IMR-90 (cell line): ENCODE measurements at regions of chr6 and their contacts with region 1.

Region 1: GRCh38 chr6:135423649-135424128 is 73.9 kb downstream of the AHI1 start:
- DNase-seq: peak; percentile 59
- ATAC-seq: peak; percentile 89
- H3K4me3 ChIP-seq: no peak overlapping the region
- H3K27ac ChIP-seq: no peak overlapping the region
- H3K4me1 ChIP-seq: 0 out of 2 replicates have a peak, but pooled peaks cover 2% of the 10 kb centered on the region
- H3K27me3 ChIP-seq: no peaks in the 10 kb centered on the region
- CTCF ChIP-seq: peak; percentile 78
- POLR2A ChIP-seq: no peak
- RAD21 ChIP-seq: peak; percentile 80

Region 2: DNA sequence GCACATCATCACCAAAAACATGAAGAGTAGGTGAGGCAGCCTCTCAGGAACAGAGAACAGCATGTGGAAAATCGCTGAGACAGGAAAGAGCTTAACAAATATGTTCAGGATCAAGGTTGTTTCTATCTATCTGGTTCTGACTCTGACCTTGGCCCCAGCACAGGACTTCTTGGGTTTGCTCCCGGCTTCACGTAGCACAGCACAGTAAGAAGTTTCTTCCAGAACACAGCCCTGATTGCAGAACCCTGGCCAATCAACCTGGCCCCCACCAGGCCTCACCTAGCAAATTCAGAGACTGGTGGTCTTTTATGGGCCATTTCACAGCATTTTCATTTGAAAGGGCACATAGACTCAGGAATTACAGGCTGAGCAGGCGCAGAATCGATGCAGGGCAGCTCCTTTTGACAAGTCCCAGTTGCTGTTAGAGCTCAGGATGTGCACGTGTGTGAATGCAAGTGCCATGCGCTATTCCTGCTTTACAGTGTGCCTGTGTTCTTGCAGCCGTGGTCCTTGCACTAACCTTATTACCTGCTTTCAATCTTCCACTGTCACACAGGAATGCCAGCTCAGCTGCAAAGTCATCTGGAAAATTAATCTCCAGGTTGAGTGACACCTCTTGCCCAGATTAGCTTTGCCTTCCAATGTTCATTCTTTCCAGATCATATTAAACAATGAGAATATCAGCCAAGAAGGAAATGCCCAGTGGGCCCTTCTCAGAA is 1270.8 kb before region 1 on chr6:
- CTCF ChIA-PET with region 1: no interaction called
- POLR2A ChIA-PET with region 1: no interaction called
- dilution Hi-C with region 1: no loop called
- in situ Hi-C with region 1: loop called (anchors 25 kb)
- intact Hi-C with region 1: loop called (anchors 10 kb)
- DNase-seq: no peak
- ATAC-seq: no peak
- H3K4me3 ChIP-seq: no peak overlapping the region
- H3K27ac ChIP-seq: no peak overlapping the region
- H3K4me1 ChIP-seq: no peaks in the 10 kb centered on the region
- H3K27me3 ChIP-seq: no peaks in the 10 kb centered on the region
- CTCF ChIP-seq: no peak
- POLR2A ChIP-seq: no peak
- RAD21 ChIP-seq: no peak

Region 3: DNA sequence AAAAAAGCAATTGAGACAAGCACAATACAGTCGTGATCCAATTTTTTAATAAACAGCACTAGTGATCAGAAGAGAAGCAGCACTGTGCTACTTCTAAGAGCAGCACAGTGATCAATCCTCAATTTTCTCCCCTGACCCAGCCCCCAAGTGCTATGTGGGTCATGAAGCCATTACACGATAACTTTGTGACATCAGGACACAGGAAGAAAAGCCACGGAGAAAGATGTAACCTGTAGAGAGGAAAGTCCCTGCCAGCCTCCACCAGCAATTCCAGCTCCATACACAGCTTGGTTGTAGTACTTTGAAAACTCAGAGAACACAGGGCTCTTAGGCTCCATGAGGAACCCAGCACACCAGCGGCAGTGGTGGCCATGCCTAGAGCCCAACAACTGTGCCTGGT is 287.9 kb before region 1 on chr6:
- CTCF ChIA-PET with region 1: no interaction called
- POLR2A ChIA-PET with region 1: no interaction called
- dilution Hi-C with region 1: no loop called
- in situ Hi-C with region 1: loop called (anchors 10 kb)
- intact Hi-C with region 1: no loop called
- DNase-seq: no peak
- ATAC-seq: no peak
- H3K4me3 ChIP-seq: no peak overlapping the region
- H3K27ac ChIP-seq: no peak overlapping the region
- H3K4me1 ChIP-seq: no peaks in the 10 kb centered on the region
- H3K27me3 ChIP-seq: peaks cover 27% of the 10 kb centered on the region
- CTCF ChIP-seq: no peak
- POLR2A ChIP-seq: no peak
- RAD21 ChIP-seq: no peak

Region 4: GRCh38 chr6:135145063-135145800 is 278.5 kb before region 1 on chr6:
- CTCF ChIA-PET with region 1: interaction called, 4 read pairs
- POLR2A ChIA-PET with region 1: no interaction called
- dilution Hi-C with region 1: no loop called
- in situ Hi-C with region 1: no loop called
- intact Hi-C with region 1: loop called (anchors 1 kb)
- DNase-seq: peak; percentile 43
- ATAC-seq: peak; percentile 54; the same call in 1 of the 2 replicates
- H3K4me3 ChIP-seq: no peak overlapping the region
- H3K27ac ChIP-seq: no peak overlapping the region
- H3K4me1 ChIP-seq: peaks cover 4% of the 10 kb centered on the region
- H3K27me3 ChIP-seq: peaks cover 10% of the 10 kb centered on the region
- CTCF ChIP-seq: peak; percentile 64
- POLR2A ChIP-seq: no peak
- RAD21 ChIP-seq: peak; percentile 81

Region 5: GRCh38 chr6:135180542-135181332 is 243.0 kb before region 1 on chr6 and contains the start of gene MYB:
- CTCF ChIA-PET with region 1: no interaction called
- POLR2A ChIA-PET with region 1: no interaction called
- dilution Hi-C with region 1: no loop called
- in situ Hi-C with region 1: no loop called
- intact Hi-C with region 1: loop called (anchors 5 kb)
- DNase-seq: peak; percentile 38
- ATAC-seq: peak; percentile 87
- H3K4me3 ChIP-seq: peak within 1 kb of the TSS; percentile 72
- H3K27ac ChIP-seq: no peak within 1 kb of the TSS
- H3K4me1 ChIP-seq: peaks cover 4% of the 10 kb centered on the region; the same call in 1 of the 2 replicates
- H3K27me3 ChIP-seq: peaks cover 30% of the 10 kb centered on the region
- CTCF ChIP-seq: no peak
- POLR2A ChIP-seq: no peak
- RAD21 ChIP-seq: no peak
- total RNA-seq, gene MYB: 0.83 and 0.90 TPM in 2 replicates

Region 6: GRCh38 chr6:135314543-135314942 is 109.1 kb before region 1 on chr6:
- CTCF ChIA-PET with region 1: no interaction called
- POLR2A ChIA-PET with region 1: no interaction called
- dilution Hi-C with region 1: no loop called
- in situ Hi-C with region 1: no loop called
- intact Hi-C with region 1: no loop called
- DNase-seq: no peak
- ATAC-seq: no peak
- H3K4me3 ChIP-seq: no peak overlapping the region
- H3K27ac ChIP-seq: no peak overlapping the region
- H3K4me1 ChIP-seq: no peaks in the 10 kb centered on the region
- H3K27me3 ChIP-seq: no peaks in the 10 kb centered on the region
- CTCF ChIP-seq: no peak
- POLR2A ChIP-seq: no peak
- RAD21 ChIP-seq: no peak

Region 7: GRCh38 chr6:135703621-135704020 is 279.9 kb after region 1 on chr6:
- CTCF ChIA-PET with region 1: no interaction called
- POLR2A ChIA-PET with region 1: no interaction called
- dilution Hi-C with region 1: no loop called
- in situ Hi-C with region 1: no loop called
- intact Hi-C with region 1: no loop called
- DNase-seq: no peak
- ATAC-seq: no peak
- H3K4me3 ChIP-seq: no peak overlapping the region
- H3K27ac ChIP-seq: no peak overlapping the region
- H3K4me1 ChIP-seq: no peaks in the 10 kb centered on the region
- H3K27me3 ChIP-seq: no peaks in the 10 kb centered on the region
- CTCF ChIP-seq: no peak
- POLR2A ChIP-seq: no peak
- RAD21 ChIP-seq: no peak